ENCODE measurements at regions of chr10 and their contacts with region 1.

Region 1: GRCh38 chr10:91908337-91909116 is 759 bp downstream of the FGFBP3 start:
- DNase-seq: peak; percentile 77
- H3K4me3 Mint-ChIP-seq: peak overlapping the region; percentile 90
- H3K27ac Mint-ChIP-seq: peak overlapping the region; percentile 74
- H3K4me1 Mint-ChIP-seq: peaks cover 20% of the 10 kb centered on the region
- H3K27me3 Mint-ChIP-seq: peaks cover 7% of the 10 kb centered on the region

Region 2: DNA sequence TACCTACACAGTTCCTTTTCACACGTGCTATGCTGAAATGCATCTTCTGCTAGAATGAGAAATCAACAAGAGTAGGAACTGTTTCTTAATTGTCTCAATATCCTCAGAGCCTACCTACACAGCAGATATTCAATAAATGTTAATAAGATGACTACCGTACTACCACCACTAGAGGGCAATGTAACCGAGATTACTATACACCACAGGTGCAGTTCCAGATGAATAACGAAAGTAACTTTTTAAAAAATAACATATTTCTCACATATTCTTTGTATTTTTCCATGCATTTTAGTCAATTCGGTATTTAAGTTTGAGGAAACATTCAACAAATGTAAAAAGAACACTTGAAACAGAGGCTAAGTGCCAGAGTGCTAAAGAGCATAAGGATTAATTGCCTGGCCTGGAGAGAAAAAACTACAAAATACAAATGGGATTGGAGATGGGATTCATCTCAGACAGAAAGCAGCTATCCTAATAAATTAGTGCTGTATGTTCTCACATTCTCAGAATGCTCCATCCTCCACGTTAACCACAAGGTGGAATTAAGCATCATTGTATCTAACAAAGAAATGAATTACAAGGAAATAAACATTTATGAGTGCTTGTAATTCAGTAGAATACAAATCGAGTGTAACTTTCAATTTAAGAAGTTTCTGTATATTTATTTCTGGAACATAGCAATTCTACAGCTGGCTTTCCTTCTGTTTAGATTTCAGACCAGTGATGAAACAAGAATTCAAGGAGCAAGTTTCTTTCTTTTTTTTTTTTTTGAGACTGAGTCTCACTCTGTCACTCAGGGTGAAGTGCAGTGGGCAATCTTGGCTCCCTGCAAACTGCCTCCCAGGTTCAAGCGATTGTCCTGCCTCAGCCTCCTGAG is 518.7 kb before region 1 on chr10:
- CTCF ChIA-PET with region 1: interaction called, 4 read pairs
- intact Hi-C with region 1: loop called (anchors 1 kb)
- DNase-seq: no peak
- H3K4me3 Mint-ChIP-seq: no peak overlapping the region
- H3K27ac Mint-ChIP-seq: no peak overlapping the region
- H3K4me1 Mint-ChIP-seq: peaks cover 4% of the 10 kb centered on the region
- H3K27me3 Mint-ChIP-seq: peaks cover 12% of the 10 kb centered on the region

Region 3: DNA sequence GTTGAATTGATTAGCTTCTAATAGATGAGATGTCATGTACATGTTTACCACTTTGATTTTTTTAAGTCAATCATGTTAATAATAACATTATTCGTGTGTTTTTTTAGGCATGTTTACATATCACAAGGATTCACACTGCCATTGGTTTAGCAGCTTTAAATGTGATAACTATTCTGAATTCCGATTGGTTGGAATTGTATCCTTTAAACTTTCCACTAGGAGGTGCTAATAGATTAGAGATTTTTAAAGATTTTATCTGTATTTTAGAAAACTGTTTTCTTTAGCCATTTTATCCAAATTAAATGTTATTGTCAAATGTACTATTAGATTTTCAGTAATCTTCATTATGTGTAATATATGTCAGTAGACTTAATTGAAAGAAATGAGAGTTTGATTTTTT is 415.2 kb before region 1 on chr10:
- CTCF ChIA-PET with region 1: no interaction called
- intact Hi-C with region 1: loop called (anchors 2 kb)
- DNase-seq: no peak
- H3K4me3 Mint-ChIP-seq: no peak overlapping the region
- H3K27ac Mint-ChIP-seq: no peak overlapping the region
- H3K4me1 Mint-ChIP-seq: no peaks in the 10 kb centered on the region
- H3K27me3 Mint-ChIP-seq: no peaks in the 10 kb centered on the region

Region 4: DNA sequence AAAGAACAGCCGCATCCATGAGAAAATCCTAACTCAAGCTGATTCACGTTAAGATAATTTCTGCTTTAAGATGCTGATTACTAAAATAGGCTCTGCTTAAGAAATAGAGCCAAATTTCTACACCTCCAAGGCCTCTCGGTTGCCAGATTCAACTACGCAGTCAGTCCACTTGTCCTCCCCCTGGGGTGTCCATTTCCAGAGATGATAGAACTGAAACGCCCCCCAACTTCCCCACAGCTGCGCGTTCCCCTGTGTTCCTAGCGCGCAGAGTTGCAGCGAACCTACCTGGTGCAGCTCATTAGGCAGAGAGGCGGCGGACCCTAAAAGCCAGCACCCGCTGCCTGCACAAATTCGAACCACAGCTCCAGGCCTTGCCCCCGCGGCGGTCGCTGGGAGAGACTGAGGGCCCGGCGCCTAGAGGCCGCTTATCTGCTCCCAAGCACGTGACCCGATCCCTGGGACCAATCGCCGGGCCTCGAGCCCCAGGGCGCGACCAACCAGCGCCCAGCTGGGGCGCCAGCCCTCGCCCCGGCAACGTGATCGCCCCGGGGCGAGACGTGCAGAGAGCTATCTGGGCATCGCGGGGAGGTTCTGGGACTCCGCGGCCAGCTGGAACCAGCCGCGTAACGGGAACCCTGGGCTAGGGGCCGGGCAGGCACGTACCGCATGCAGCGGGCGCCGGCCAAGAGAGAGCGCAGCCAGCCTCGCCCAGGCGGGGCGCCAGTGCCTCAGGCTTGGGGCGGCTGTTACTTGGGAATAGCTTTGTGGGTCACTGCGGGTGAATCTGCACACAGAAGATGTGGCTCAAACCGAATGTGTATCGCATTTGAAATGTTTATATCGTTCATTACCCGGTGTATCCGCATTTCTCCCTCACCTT is 275.6 kb before region 1 on chr10 and contains the start of gene PPP1R3C:
- CTCF ChIA-PET with region 1: interaction called, 3 read pairs
- intact Hi-C with region 1: loop called (anchors 2 kb)
- DNase-seq: peak; percentile 63
- H3K4me3 Mint-ChIP-seq: peak within 1 kb of the TSS; percentile 71
- H3K27ac Mint-ChIP-seq: no peak within 1 kb of the TSS
- H3K4me1 Mint-ChIP-seq: peaks cover 9% of the 10 kb centered on the region
- H3K27me3 Mint-ChIP-seq: peaks cover 55% of the 10 kb centered on the region
- total RNA-seq, gene PPP1R3C: 0.07 to 0.12 TPM

Region 5: GRCh38 chr10:91856637-91857036 is 51.9 kb before region 1 on chr10:
- CTCF ChIA-PET with region 1: interaction called, 3 read pairs
- intact Hi-C with region 1: loop called (anchors 2 kb)
- DNase-seq: peak; percentile 7
- H3K4me3 Mint-ChIP-seq: no peak overlapping the region
- H3K27ac Mint-ChIP-seq: no peak overlapping the region
- H3K4me1 Mint-ChIP-seq: no peaks in the 10 kb centered on the region
- H3K27me3 Mint-ChIP-seq: no peaks in the 10 kb centered on the region

Region 6: DNA sequence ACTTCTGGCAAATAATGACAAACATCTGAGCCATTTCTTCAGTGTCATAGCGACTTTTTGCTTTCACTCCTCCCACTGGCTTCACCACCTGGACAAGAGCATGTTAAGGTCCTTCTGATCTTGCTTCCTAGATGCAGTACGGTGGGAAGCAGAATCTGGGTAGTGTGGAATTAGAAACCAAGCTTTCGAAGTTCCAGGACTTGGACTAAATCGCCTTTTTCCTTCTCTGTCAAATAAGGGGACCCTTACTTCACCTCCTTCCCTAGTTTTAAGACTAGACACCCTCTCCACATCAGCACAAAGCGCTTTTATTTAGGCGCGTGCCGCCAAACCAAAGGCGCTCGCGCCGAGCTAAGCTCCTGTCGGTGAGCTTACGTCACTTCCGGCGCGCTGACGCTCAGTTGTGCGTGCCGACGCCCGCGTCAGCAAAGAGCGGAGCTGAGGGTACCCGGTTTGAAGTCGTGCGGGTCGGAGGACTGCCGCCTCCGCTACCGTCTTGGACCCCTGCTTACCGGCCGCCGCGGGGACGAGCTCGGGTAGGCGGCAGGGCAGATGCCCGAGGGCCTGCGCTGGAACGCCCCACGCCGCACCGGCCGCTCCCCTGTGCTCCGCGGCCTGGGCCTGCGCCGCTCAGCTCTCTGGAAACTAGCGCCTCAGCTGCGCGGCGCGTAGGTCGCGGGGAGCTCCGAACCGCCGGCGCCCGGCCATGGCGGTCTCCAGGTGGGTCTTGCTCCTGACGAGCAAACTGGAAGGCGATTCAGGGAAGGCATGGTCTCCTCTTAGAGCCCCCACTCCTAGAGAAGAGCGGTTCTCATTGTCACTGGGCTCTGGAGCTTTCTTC is 15.1 kb after region 1 on chr10 and contains the start of gene BTAF1:
- CTCF ChIA-PET with region 1: interaction called, 15 read pairs
- intact Hi-C with region 1: loop called (anchors 1 kb)
- DNase-seq: peak; percentile 93
- H3K4me3 Mint-ChIP-seq: peak within 1 kb of the TSS; percentile 86
- H3K27ac Mint-ChIP-seq: peak within 1 kb of the TSS; percentile 99
- H3K4me1 Mint-ChIP-seq: peaks cover 35% of the 10 kb centered on the region
- H3K27me3 Mint-ChIP-seq: no peaks in the 10 kb centered on the region
- total RNA-seq, gene BTAF1: 42.6 to 43.6 TPM

Region 7: GRCh38 chr10:92432596-92432995 is 524.1 kb after region 1 on chr10:
- CTCF ChIA-PET with region 1: no interaction called
- intact Hi-C with region 1: loop called (anchors 2 kb)
- DNase-seq: no peak
- H3K4me3 Mint-ChIP-seq: no peak overlapping the region
- H3K27ac Mint-ChIP-seq: no peak overlapping the region
- H3K4me1 Mint-ChIP-seq: no peaks in the 10 kb centered on the region
- H3K27me3 Mint-ChIP-seq: no peaks in the 10 kb centered on the region